ENCODE measurements at regions of chr5 and their contacts with region 1.

Region 1: GRCh38 chr5:35926389-35927051 is 11.9 kb downstream of the CAPSL start:
- DNase-seq: peak; percentile 34 to 59 (median 51)
- H3K4me3 ChIP-seq: no peak overlapping the region
- H3K4me3 Mint-ChIP-seq: peak overlapping the region in 1 of 2 donors; percentile 88
- H3K27ac ChIP-seq: no peak overlapping the region
- H3K27ac Mint-ChIP-seq: no peak overlapping the region
- H3K4me1 ChIP-seq: peaks cover 12 to 17% of the 10 kb centered on the region in 2 donors
- H3K4me1 Mint-ChIP-seq: peaks cover 22% of the 10 kb centered on the region
- H3K27me3 ChIP-seq: no peaks in the 10 kb centered on the region
- H3K27me3 Mint-ChIP-seq: peaks cover 6 to 8% (median 7%) of the 10 kb centered on the region in 3 donors
- CTCF ChIP-seq: peak; percentile 92

Region 2: DNA sequence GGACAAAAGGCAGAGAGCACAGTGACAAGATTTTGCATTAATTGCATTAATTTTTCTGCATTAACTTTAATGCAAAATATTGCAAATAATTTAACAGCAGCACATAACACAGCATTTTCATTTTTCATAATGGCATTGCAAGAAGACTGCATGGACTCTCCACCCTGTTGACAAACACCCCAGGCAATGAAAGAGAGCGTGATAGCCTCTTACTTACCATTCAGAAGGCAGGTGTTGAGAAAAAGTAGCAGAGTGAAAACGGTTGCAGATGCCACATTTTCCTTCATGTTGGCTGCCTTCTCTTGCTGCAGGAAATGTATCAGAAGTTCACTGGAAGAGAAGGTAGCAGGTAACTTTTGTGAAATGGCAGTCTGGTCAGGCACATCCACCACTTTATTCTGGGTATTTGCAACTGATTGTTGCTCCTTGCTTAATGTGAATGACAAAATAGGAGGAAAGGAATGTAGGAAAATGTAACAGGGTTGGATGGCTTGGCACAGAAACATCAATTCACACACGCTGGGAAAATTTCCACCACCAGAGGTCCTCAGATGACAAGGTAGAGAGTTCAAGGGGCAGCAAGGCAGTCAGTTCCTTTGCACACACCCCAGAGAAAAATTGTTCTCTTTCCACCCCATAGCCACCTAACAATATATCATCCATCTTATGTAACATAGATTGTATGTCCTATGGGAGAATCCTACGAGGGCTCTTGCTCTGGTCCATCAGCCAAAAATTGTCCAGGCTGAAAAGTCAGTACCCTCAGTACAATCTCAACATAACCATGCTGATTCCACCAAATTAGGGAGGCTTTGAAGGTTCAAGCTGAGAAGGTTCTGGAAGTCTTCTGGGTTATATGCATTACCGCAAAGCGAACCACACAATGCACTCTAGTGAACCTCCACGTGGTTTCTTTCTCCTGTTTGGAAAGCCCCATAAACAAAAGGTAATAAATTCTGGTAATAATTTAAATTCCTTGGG is 836.9 kb before region 1 on chr5:
- intact Hi-C with region 1: loop called (anchors 5 kb)
- DNase-seq: peak; percentile 17 to 41 (median 34)
- H3K4me3 ChIP-seq: no peak overlapping the region
- H3K4me3 Mint-ChIP-seq: no peak overlapping the region
- H3K27ac ChIP-seq: no peak overlapping the region
- H3K27ac Mint-ChIP-seq: no peak overlapping the region
- H3K4me1 ChIP-seq: no peaks in the 10 kb centered on the region
- H3K4me1 Mint-ChIP-seq: no peaks in the 10 kb centered on the region
- H3K27me3 ChIP-seq: no peaks in the 10 kb centered on the region
- H3K27me3 Mint-ChIP-seq: peaks cover 0 to 1% (median 1%) of the 10 kb centered on the region in 3 donors
- CTCF ChIP-seq: peak; percentile 73

Region 3: DNA sequence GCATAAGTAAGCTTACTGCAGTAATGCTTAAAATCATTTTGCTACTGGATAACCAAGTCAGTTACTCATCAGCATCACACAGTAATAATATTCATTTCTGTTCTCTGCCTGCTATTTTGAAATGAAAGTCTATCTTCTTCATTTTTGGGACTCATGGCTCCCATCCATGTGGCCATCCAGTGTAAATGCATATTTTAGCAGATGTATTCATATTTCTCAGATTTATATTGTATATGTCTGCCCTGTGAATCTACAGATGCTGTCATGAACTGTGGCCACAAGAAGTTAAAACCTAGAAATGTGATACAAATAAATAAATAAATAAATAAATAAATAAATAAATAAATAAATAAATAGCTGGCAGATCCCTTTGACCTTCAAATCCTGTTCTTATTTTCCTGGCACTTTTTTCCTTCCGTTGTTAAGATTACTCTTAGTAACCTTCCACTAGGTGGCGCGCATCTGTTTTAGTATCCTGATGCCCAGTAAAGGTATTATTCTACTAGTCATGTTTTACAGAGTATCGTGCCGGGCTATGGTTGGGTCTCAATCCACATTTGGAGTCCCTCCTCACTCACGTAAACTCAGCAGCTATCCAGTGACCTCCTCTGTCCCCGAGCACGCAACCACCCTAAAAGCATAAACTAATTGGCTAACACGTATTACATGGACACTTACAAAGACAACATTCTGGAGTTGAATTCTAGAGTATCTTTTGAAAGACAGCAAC is 149.0 kb before region 1 on chr5:
- intact Hi-C with region 1: loop called (anchors 1 to 5 kb)
- DNase-seq: peak; percentile 37 to 57 (median 57)
- H3K4me3 ChIP-seq: no peak overlapping the region
- H3K4me3 Mint-ChIP-seq: no peak overlapping the region
- H3K27ac ChIP-seq: no peak overlapping the region
- H3K27ac Mint-ChIP-seq: no peak overlapping the region
- H3K4me1 ChIP-seq: no peaks in the 10 kb centered on the region
- H3K4me1 Mint-ChIP-seq: peaks cover 3% of the 10 kb centered on the region
- H3K27me3 ChIP-seq: no peaks in the 10 kb centered on the region
- H3K27me3 Mint-ChIP-seq: peaks cover 0 to 2% (median 0%) of the 10 kb centered on the region in 3 donors
- CTCF ChIP-seq: peak; percentile 84

Region 4: GRCh38 chr5:35869685-35870277 is 56.7 kb before region 1 on chr5:
- intact Hi-C with region 1: no loop called
- DNase-seq: no peak
- H3K4me3 ChIP-seq: no peak overlapping the region
- H3K4me3 Mint-ChIP-seq: no peak overlapping the region
- H3K27ac ChIP-seq: no peak overlapping the region
- H3K27ac Mint-ChIP-seq: no peak overlapping the region
- H3K4me1 ChIP-seq: no peaks in the 10 kb centered on the region
- H3K4me1 Mint-ChIP-seq: peaks cover 6% of the 10 kb centered on the region
- H3K27me3 ChIP-seq: no peaks in the 10 kb centered on the region
- H3K27me3 Mint-ChIP-seq: no peaks in the 10 kb centered on the region
- CTCF ChIP-seq: no peak

Region 5: GRCh38 chr5:35884115-35884788 is 42.3 kb before region 1 on chr5:
- intact Hi-C with region 1: no loop called
- DNase-seq: peak; percentile 33 to 83 (median 39)
- H3K4me3 ChIP-seq: peak overlapping the region in 1 of 3 experiments; percentile 3
- H3K4me3 Mint-ChIP-seq: peak overlapping the region in 1 of 2 donors; percentile 54
- H3K27ac ChIP-seq: peak overlapping the region in 1 of 2 donors; percentile 55
- H3K27ac Mint-ChIP-seq: peak overlapping the region; percentile 17 to 82 (median 77)
- H3K4me1 ChIP-seq: peaks cover 24 to 30% of the 10 kb centered on the region in 2 donors
- H3K4me1 Mint-ChIP-seq: peaks cover 29% of the 10 kb centered on the region
- H3K27me3 ChIP-seq: no peaks in the 10 kb centered on the region
- H3K27me3 Mint-ChIP-seq: peaks cover 0 to 1% (median 0%) of the 10 kb centered on the region in 3 donors
- CTCF ChIP-seq: no peak